ENCODE measurements at regions of chr12 and their contacts with region 1.

Region 1: GRCh38 chr12:13196130-13196921 is at the start of gene EMP1:
- DNase-seq: peak; percentile 90
- H3K4me3 Mint-ChIP-seq: peak within 1 kb of the TSS; percentile 81
- H3K27ac Mint-ChIP-seq: peak within 1 kb of the TSS; percentile 86
- H3K4me1 Mint-ChIP-seq: peaks cover 27% of the 10 kb centered on the region
- H3K27me3 Mint-ChIP-seq: peaks cover 24% of the 10 kb centered on the region
- total RNA-seq, gene EMP1: 22.2 and 26.4 TPM in 2 replicates

Region 2: DNA sequence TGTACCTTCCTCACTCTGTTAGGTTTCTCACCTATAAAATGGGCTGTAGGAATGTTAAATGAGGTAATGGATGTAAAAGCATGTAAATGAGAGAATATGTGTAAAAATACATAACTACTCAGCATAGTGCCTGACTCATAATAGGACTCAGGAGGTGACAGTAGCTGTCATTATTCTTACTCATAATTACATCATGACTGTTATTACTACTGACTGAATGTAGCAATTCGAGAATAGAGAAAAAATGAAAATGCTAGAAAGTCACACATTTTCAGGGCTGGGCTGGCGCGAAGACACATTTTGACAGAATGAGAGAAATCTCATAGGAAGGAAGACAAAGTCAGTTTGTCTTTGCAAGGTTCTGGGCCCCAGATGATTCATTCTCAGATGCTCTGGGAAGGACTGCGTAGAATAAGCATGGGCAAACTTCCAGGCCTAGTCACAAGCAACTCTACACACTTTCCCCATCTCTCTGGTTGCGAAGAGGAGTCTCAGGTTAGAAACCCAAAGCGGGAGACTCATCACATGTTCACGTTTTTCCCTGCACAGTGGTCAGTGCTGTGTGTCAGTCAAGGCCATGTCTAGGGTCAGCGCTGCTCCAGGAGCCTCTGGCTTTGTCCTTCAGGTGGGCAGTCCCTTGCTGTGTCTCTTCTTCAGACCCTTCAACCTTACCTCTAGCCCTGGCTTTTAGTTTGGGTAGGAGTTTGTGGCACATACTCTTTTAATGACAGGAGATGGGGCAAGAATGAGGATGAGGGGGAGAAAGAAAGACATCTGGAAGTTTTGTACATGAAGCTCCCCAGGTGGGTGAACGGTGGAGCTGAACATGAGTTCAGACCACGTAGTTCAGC is 296.6 kb before region 1 on chr12:
- intact Hi-C with region 1: loop called (anchors 1 kb)
- DNase-seq: peak; percentile 67
- H3K4me3 Mint-ChIP-seq: no peak overlapping the region
- H3K27ac Mint-ChIP-seq: peak overlapping the region; percentile 79
- H3K4me1 Mint-ChIP-seq: peaks cover 10% of the 10 kb centered on the region
- H3K27me3 Mint-ChIP-seq: peaks cover 3% of the 10 kb centered on the region

Region 3: DNA sequence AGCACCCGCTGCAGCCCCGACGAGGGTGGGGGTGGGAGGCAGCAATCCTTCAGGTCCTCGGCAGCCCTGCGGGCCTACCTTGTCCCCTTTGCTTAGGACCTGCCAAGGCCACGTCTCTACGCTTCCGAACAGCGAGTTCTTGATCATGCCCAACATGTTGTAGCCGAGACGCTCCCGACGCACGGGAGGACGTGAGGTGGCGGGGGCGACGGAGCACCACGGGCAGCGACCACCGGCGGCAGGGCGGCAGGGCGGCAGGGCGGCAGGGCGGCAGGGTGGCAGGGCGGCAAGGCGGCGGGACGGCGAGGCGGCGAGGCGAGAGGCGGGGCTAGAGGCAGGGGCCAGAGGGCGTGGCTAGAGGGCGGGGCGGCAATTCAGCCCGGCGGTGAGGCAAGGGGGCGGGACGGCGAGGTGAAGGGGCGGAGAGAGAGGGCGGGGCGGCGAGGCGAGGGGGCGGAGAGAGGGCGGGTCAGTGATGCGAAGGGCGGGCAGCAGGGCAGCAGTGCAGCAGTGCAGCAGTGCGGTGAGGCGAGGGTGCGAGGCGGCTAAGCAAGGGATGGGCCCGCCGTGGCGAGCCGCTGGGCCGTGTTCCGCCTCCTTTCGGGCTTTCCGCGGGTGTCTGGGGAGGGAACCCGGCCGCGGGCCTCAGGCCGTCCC is 196.2 kb before region 1 on chr12 and contains the start of gene HEBP1:
- intact Hi-C with region 1: loop called (anchors 1 kb)
- DNase-seq: peak; percentile 98
- H3K4me3 Mint-ChIP-seq: peak within 1 kb of the TSS; percentile 91
- H3K27ac Mint-ChIP-seq: peak within 1 kb of the TSS; percentile 89
- H3K4me1 Mint-ChIP-seq: peaks cover 30% of the 10 kb centered on the region
- H3K27me3 Mint-ChIP-seq: peaks cover 25% of the 10 kb centered on the region
- total RNA-seq, gene HEBP1: 12.0 and 13.8 TPM in 2 replicates

Region 4: GRCh38 chr12:13124661-13125505 is 71.4 kb before region 1 on chr12:
- intact Hi-C with region 1: no loop called
- DNase-seq: no peak
- H3K4me3 Mint-ChIP-seq: no peak overlapping the region
- H3K27ac Mint-ChIP-seq: no peak overlapping the region
- H3K4me1 Mint-ChIP-seq: no peaks in the 10 kb centered on the region
- H3K27me3 Mint-ChIP-seq: peaks cover 12% of the 10 kb centered on the region

Region 5: DNA sequence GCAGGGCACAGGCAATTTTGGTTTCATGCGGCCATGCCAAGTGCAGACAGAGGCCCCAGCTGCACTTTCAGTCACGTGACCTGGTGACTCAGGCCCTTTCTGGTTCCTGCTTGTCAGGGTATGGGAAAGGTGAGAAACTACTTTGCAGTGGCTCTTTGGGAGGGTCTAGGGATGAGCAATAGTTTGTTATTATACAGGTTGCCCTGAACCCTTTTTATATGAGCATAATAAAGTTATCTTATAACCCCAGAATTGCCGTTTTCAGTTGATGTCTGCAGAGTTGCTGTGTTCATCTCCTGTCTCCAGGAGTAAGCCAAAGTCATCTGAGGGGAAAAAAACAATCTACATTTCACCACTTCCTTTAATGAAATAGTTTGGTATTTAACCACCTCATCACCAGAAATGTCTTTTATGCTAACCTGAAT is 30.7 kb before region 1 on chr12:
- intact Hi-C with region 1: loop called (anchors 1 kb)
- DNase-seq: peak; percentile 87
- H3K4me3 Mint-ChIP-seq: no peak overlapping the region
- H3K27ac Mint-ChIP-seq: no peak overlapping the region
- H3K4me1 Mint-ChIP-seq: peaks cover 17% of the 10 kb centered on the region
- H3K27me3 Mint-ChIP-seq: peaks cover 18% of the 10 kb centered on the region

Region 6: DNA sequence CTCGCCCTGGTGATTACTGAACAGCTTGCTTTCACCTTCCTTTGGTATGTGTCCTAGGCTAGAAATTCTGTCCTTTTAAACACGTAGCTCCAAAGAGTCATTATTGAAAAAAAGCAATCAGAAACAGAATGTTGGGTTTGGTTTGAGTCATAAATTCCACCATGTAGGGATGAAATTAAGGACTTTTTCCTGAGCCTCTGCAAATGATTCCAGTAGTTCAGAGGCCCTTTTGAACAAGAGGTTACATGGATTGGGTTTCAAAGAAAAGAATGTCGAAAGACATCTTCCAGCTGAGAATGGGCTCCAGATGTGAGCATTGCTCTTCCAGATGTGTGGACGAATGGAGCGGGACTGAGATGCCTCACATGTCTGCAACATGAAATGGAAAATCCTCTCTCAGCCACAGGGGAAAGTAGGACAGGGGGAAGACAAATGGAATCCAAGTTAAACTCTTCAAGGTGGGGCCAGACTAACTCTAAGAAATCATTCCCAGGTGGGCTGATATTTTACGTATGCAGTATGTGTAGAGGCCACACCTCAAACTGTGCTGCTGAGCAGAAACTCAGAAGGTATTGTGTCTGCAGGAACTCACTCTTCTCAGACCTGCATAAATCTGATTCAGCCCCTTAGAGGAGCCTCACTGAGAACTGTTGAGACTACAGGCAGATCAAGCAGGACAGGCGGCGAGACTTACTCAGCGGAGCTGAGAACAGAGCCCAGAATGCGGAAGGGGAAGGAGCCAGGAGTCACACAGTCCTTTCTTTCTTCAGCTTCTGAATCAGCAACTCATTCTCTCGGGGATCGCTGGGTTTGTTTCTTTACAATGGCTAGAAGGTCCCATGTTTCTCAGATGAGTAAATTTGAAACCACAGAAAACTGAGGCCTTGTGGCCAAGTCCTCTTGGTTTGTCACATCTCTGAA is 23.1 kb before region 1 on chr12:
- intact Hi-C with region 1: loop called (anchors 2 kb)
- DNase-seq: peak; percentile 69
- H3K4me3 Mint-ChIP-seq: no peak overlapping the region
- H3K27ac Mint-ChIP-seq: peak overlapping the region; percentile 52
- H3K4me1 Mint-ChIP-seq: peaks cover 13% of the 10 kb centered on the region
- H3K27me3 Mint-ChIP-seq: peaks cover 53% of the 10 kb centered on the region

Region 7: DNA sequence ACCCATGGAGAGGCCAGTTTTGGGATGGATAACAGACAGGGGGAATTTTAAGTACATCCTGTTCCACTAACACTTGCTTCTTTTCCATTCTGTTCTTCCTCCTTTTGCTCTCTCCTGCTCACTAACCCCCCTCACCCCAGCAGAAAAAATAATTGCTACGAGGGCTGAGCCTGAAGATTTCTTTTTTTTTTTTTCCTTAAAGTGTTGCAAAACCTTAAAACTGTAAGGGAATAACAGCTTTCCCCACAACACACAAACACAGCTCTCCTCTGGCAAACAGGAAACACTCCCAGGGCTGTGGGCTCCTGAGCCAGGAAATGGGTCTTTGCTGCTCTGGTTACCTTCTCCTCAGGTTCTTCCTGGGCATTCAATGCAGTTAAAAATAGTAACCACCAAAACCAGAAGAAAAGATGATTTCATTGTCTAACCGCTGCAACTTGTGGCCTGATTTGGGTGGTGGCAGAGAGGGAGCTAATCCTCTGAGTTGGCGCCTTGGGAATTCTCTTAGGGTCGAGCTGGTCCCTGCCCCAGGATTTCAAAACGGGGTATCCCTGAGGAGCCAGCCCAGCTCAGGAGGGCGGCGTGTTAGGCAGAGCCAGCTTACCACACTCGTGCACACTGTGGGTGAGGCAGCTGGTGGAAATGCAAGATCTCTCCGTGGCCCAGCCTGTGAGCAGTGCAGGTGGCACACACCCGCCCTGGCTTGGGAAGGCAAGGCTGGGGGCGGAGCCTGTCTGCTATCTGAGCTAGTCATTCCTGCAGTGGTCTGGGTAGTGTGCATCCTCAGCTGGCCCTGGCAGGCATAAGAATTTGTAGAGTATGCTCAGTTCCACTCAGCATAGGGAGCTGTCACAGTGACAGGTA is 16.9 kb before region 1 on chr12:
- intact Hi-C with region 1: loop called (anchors 1 kb)
- DNase-seq: peak; percentile 82
- H3K4me3 Mint-ChIP-seq: peak overlapping the region; percentile 73
- H3K27ac Mint-ChIP-seq: peak overlapping the region; percentile 27
- H3K4me1 Mint-ChIP-seq: peaks cover 16% of the 10 kb centered on the region
- H3K27me3 Mint-ChIP-seq: peaks cover 41% of the 10 kb centered on the region

Measured in activated CD4-positive, alpha-beta T cell treated with anti-CD3 and anti-CD28 coated beads, Interleukin-2, amount 10 ng/mL, durations not matched to agents 24 days and 14 days (primary cell).